Breast epithelium (tissue), 4 donors: ENCODE measurements at regions of chr4 and their contacts with region 1.

Region 1: GRCh38 chr4:3477750-3478430 is 14.8 kb downstream of the DOK7 start:
- DNase-seq: no peak
- H3K4me3 ChIP-seq: no peak overlapping the region
- H3K27ac ChIP-seq: no peak overlapping the region
- H3K4me1 ChIP-seq: no peaks in the 10 kb centered on the region
- H3K27me3 ChIP-seq: peaks cover 0 to 10% of the 10 kb centered on the region in 2 donors
- CTCF ChIP-seq: no peak
- POLR2A ChIP-seq: no peak

Region 2: GRCh38 chr4:3409571-3410091 is 68.3 kb before region 1 on chr4:
- intact Hi-C with region 1: loop called (anchors 2 kb)
- DNase-seq: peak in 1 of 2 donors; percentile 50
- H3K4me3 ChIP-seq: no peak overlapping the region
- H3K27ac ChIP-seq: no peak overlapping the region
- H3K4me1 ChIP-seq: no peaks in the 10 kb centered on the region
- H3K27me3 ChIP-seq: no peaks in the 10 kb centered on the region
- CTCF ChIP-seq: no peak
- POLR2A ChIP-seq: no peak

Region 3: GRCh38 chr4:3462790-3463430 is 15.0 kb before region 1 on chr4 and contains the start of gene DOK7:
- intact Hi-C with region 1: no loop called
- DNase-seq: no peak
- H3K4me3 ChIP-seq: peak within 1 kb of the TSS; percentile 39 to 66 (median 54)
- H3K27ac ChIP-seq: peak within 1 kb of the TSS; percentile 54 to 55
- H3K4me1 ChIP-seq: peaks cover 5 to 6% of the 10 kb centered on the region in 2 donors
- H3K27me3 ChIP-seq: peaks cover 0 to 25% of the 10 kb centered on the region in 2 donors
- CTCF ChIP-seq: no peak
- POLR2A ChIP-seq: no peak
- total RNA-seq, gene DOK7: 1.3 to 3.5 TPM in 2 of 3 donors, not detected in the other